CD8-positive, alpha-beta T cell (primary cell): ENCODE measurements at regions of chr2 and their contacts with region 1.

Region 1: DNA sequence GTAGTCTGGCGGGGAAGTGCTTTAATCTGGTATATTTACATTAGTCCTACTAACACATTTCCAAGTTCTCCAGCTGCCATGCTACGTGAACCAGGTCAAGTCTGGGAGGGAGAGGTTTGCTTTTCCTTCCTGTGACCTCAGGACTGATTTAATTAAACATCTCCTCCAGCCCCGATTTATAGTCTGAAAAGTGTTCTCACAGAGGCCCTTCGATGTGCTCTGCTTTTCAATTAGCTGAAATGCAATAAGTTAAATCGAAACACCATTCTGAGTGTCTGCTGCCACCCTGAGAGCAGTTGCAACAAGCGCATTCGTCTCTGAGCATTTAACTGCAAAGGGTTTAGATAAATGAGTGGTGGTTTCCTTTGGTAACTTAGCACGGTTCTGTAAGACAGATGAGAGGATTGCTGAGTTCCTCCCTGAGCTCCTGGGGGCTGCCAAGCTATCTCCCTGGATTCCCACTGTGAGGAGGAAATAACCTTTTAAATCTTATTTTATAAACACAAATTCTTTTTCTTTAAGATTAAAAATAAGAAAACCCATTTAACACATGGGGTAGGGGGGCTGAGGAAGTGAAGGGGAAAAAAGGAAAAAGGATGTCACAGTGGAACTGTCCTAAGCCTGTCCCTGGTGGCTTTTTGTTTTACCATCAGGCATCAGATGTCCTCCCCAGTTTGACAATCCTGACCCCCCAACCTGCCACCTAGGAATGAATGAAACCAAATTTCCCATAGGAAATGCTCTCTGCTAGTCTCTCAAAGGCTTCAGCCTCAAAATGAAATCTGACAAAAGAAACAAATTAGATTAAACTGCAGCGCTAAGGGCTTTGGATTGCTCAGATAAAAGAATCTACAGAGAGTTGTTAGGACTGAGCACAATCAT is 56.5 kb upstream of the CREB1 start:
- DNase-seq: peak in 6 of 9 experiments; percentile 9 to 62 (median 37)
- ATAC-seq: peak; percentile 57
- H3K4me3 ChIP-seq: no peak overlapping the region
- H3K4me3 Mint-ChIP-seq: no peak overlapping the region
- H3K27ac ChIP-seq: no peak overlapping the region
- H3K27ac Mint-ChIP-seq: no peak overlapping the region
- H3K4me1 ChIP-seq: no peaks in the 10 kb centered on the region
- H3K4me1 Mint-ChIP-seq: peaks cover 13% of the 10 kb centered on the region
- H3K27me3 ChIP-seq: no peaks in the 10 kb centered on the region
- H3K27me3 Mint-ChIP-seq: no peaks in the 10 kb centered on the region
- CTCF ChIP-seq: peak; percentile 33

Region 2: GRCh38 chr2:206159346-206160124 is 1313.8 kb before region 1 on chr2 and contains the starts of genes EEF1B2 and NDUFS1:
- CTCF ChIA-PET with region 1: no interaction called
- POLR2A ChIA-PET with region 1: no interaction called
- intact Hi-C with region 1: loop called (anchors 2 to 10 kb)
- DNase-seq: peak; percentile 95 to 99 (median 96)
- ATAC-seq: peak; percentile 85
- H3K4me3 ChIP-seq: peak within 1 kb of the TSS; percentile 73 to 93
- H3K4me3 Mint-ChIP-seq: peak within 1 kb of the TSS; percentile 99
- H3K27ac ChIP-seq: peak within 1 kb of the TSS; percentile 81 to 91
- H3K27ac Mint-ChIP-seq: peak within 1 kb of the TSS; percentile 100
- H3K4me1 ChIP-seq: peaks cover 30% of the 10 kb centered on the region
- H3K4me1 Mint-ChIP-seq: peaks cover 59% of the 10 kb centered on the region
- H3K27me3 ChIP-seq: no peaks in the 10 kb centered on the region
- H3K27me3 Mint-ChIP-seq: no peaks in the 10 kb centered on the region
- CTCF ChIP-seq: no peak
- total RNA-seq, gene EEF1B2: 1,147 to 1,208 TPM
- total RNA-seq, gene NDUFS1: 23.7 to 28.7 TPM

Region 3: GRCh38 chr2:206556357-206556949 is 916.8 kb before region 1 on chr2:
- CTCF ChIA-PET with region 1: no interaction called
- POLR2A ChIA-PET with region 1: no interaction called
- intact Hi-C with region 1: loop called (anchors 5 to 10 kb)
- DNase-seq: peak in 2 of 9 experiments; percentile 19 to 38
- ATAC-seq: no peak
- H3K4me3 ChIP-seq: no peak overlapping the region
- H3K4me3 Mint-ChIP-seq: no peak overlapping the region
- H3K27ac ChIP-seq: no peak overlapping the region
- H3K27ac Mint-ChIP-seq: no peak overlapping the region
- H3K4me1 ChIP-seq: peaks cover 5% of the 10 kb centered on the region
- H3K4me1 Mint-ChIP-seq: peaks cover 4% of the 10 kb centered on the region
- H3K27me3 ChIP-seq: no peaks in the 10 kb centered on the region
- H3K27me3 Mint-ChIP-seq: no peaks in the 10 kb centered on the region
- CTCF ChIP-seq: peak; percentile 20

Region 4: GRCh38 chr2:206783718-206784117 is 689.6 kb before region 1 on chr2:
- CTCF ChIA-PET with region 1: interaction called, 10 read pairs
- POLR2A ChIA-PET with region 1: no interaction called
- intact Hi-C with region 1: no loop called
- DNase-seq: no peak
- ATAC-seq: peak; percentile 44
- H3K4me3 ChIP-seq: no peak overlapping the region
- H3K4me3 Mint-ChIP-seq: no peak overlapping the region
- H3K27ac ChIP-seq: no peak overlapping the region
- H3K27ac Mint-ChIP-seq: no peak overlapping the region
- H3K4me1 ChIP-seq: no peaks in the 10 kb centered on the region
- H3K4me1 Mint-ChIP-seq: peaks cover 11% of the 10 kb centered on the region
- H3K27me3 ChIP-seq: no peaks in the 10 kb centered on the region
- H3K27me3 Mint-ChIP-seq: no peaks in the 10 kb centered on the region
- CTCF ChIP-seq: no peak

Region 5: GRCh38 chr2:206981739-206982340 is 491.4 kb before region 1 on chr2:
- CTCF ChIA-PET with region 1: interaction called, 18 read pairs
- POLR2A ChIA-PET with region 1: no interaction called
- intact Hi-C with region 1: loop called (anchors 1 kb)
- DNase-seq: peak; percentile 14 to 58 (median 42)
- ATAC-seq: peak; percentile 52
- H3K4me3 ChIP-seq: no peak overlapping the region
- H3K4me3 Mint-ChIP-seq: no peak overlapping the region
- H3K27ac ChIP-seq: no peak overlapping the region
- H3K27ac Mint-ChIP-seq: no peak overlapping the region
- H3K4me1 ChIP-seq: no peaks in the 10 kb centered on the region
- H3K4me1 Mint-ChIP-seq: no peaks in the 10 kb centered on the region
- H3K27me3 ChIP-seq: no peaks in the 10 kb centered on the region
- H3K27me3 Mint-ChIP-seq: no peaks in the 10 kb centered on the region
- CTCF ChIP-seq: no peak

Region 6: GRCh38 chr2:207046724-207047123 is 426.6 kb before region 1 on chr2:
- CTCF ChIA-PET with region 1: interaction called, 8 read pairs
- POLR2A ChIA-PET with region 1: no interaction called
- intact Hi-C with region 1: loop called (anchors 1 kb)
- DNase-seq: peak in 6 of 9 experiments; percentile 3 to 66 (median 12)
- ATAC-seq: peak; percentile 65
- H3K4me3 ChIP-seq: no peak overlapping the region
- H3K4me3 Mint-ChIP-seq: peak overlapping the region; percentile 24
- H3K27ac ChIP-seq: no peak overlapping the region
- H3K27ac Mint-ChIP-seq: no peak overlapping the region
- H3K4me1 ChIP-seq: peaks cover 9% of the 10 kb centered on the region
- H3K4me1 Mint-ChIP-seq: peaks cover 10% of the 10 kb centered on the region
- H3K27me3 ChIP-seq: no peaks in the 10 kb centered on the region
- H3K27me3 Mint-ChIP-seq: no peaks in the 10 kb centered on the region
- CTCF ChIP-seq: no peak

Region 7: DNA sequence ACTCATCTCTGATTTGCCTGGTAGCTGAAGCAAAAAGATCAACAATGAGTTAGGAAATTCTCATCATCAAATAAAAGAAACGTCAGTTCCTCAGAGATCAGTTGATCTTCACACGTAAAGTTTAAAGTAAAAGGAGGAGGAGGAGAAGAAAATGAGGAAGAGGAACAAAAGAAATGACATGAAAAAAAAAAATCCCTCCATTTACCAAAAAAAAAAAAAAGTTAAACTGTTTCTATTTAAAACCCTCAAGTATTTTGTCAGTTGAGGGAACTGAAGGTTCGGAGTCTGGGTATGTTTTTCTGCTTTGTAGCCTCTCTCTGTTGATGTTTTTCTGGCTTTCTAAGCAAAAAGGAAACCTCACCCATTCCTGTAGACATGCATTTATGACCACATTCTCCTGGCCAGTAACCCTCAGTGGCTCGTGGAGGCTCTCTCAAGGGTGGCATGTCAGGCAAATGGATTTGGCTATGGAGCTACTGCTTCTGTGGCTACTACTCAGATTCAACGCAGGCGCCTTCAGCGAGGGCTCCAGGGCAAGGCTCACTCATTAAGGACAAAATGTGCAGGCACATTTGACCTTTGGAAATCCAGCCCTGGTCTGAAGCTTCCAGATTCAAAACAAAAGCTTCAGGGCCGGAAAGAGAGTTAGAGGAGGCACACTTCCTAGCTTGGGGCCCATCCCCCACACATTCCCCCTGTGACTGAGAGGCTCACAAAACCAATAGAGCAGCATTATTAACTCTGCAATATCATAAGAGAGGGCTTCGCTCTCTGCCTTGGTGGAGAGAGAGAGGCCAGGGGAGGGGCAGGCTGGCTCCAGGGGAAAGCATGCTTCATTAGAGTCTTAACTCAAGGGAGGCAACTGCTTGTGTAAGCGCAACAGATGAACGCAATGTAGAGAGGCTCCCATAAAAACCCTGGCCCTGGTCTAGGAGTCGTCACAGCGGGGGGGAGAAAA is 329.8 kb before region 1 on chr2:
- CTCF ChIA-PET with region 1: interaction called, 7 read pairs
- POLR2A ChIA-PET with region 1: no interaction called
- intact Hi-C with region 1: loop called (anchors 1 to 2 kb)
- DNase-seq: peak; percentile 28 to 80 (median 55)
- ATAC-seq: peak; percentile 66
- H3K4me3 ChIP-seq: peak overlapping the region; percentile 6 to 36
- H3K4me3 Mint-ChIP-seq: peak overlapping the region; percentile 71
- H3K27ac ChIP-seq: peak overlapping the region; percentile 66 to 83
- H3K27ac Mint-ChIP-seq: peak overlapping the region; percentile 91
- H3K4me1 ChIP-seq: peaks cover 40% of the 10 kb centered on the region
- H3K4me1 Mint-ChIP-seq: peaks cover 63% of the 10 kb centered on the region
- H3K27me3 ChIP-seq: no peaks in the 10 kb centered on the region
- H3K27me3 Mint-ChIP-seq: no peaks in the 10 kb centered on the region
- CTCF ChIP-seq: no peak